ENCODE measurements at regions of chr11 and their contacts with region 1.

Region 1: DNA sequence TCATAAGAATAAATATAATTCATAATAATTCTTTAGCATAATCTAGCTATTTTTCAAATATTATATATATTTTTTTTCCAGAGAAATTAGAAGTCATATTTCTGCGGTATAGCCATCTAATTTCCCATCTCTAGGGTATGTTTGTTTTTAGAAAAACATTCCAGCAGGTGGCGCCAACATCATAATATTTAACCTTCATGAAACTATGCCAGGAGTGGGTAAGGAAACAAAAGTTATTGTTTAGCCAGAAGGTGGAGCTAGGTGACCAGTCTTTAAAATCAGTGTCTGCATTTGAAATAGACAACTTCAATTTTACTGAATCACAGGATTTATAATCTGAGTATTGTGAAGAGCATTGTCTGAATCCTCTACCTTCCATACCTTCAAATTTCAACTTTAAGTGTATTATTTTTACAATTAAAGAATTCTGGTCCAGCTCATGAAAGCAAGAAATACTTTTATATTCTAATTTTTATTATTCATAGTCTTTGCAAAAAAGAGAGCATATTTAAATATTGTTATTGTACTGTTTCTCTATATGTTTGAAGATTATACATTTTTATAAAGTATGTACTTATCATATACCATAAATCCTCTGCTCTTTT is 15.7 kb upstream of the CCDC179 start:
- DNase-seq: peak; percentile 81
- ATAC-seq: peak; percentile 86
- H3K4me3 Mint-ChIP-seq: no peak overlapping the region
- H3K27ac Mint-ChIP-seq: no peak overlapping the region
- H3K4me1 Mint-ChIP-seq: no peaks in the 10 kb centered on the region
- H3K27me3 Mint-ChIP-seq: no peaks in the 10 kb centered on the region
- CTCF ChIP-seq: peak; percentile 89

Region 2: GRCh38 chr11:22920939-22921565 is 45.1 kb after region 1 on chr11:
- CTCF ChIA-PET with region 1: interaction called, 13 read pairs
- POLR2A ChIA-PET with region 1: no interaction called
- intact Hi-C with region 1: no loop called
- DNase-seq: peak; percentile 30
- ATAC-seq: peak; percentile 66
- H3K4me3 Mint-ChIP-seq: no peak overlapping the region
- H3K27ac Mint-ChIP-seq: no peak overlapping the region
- H3K4me1 Mint-ChIP-seq: peaks cover 5% of the 10 kb centered on the region
- H3K27me3 Mint-ChIP-seq: no peaks in the 10 kb centered on the region
- CTCF ChIP-seq: peak; percentile 60

Region 3: DNA sequence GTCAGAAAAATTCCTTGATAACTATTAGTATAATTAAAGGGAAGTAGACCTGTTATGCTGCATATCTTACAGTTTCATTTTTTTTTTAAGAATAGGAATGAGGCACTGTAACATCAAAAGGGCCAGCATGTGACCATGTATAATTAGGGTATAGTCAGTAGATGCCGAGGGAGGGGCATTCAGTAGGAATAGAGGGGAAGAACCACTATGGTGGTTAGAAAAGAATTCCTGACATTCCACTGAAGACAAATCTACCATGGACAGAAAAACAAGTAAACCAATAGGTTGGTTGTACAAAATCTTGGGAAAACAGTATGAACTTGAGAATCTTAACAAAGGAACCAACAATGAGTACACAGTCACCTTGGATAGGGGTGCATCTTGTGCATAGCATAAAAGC is 62.7 kb after region 1 on chr11:
- CTCF ChIA-PET with region 1: no interaction called
- POLR2A ChIA-PET with region 1: no interaction called
- intact Hi-C with region 1: no loop called
- DNase-seq: no peak
- ATAC-seq: no peak
- H3K4me3 Mint-ChIP-seq: no peak overlapping the region
- H3K27ac Mint-ChIP-seq: no peak overlapping the region
- H3K4me1 Mint-ChIP-seq: no peaks in the 10 kb centered on the region
- H3K27me3 Mint-ChIP-seq: no peaks in the 10 kb centered on the region
- CTCF ChIP-seq: no peak

Region 4: DNA sequence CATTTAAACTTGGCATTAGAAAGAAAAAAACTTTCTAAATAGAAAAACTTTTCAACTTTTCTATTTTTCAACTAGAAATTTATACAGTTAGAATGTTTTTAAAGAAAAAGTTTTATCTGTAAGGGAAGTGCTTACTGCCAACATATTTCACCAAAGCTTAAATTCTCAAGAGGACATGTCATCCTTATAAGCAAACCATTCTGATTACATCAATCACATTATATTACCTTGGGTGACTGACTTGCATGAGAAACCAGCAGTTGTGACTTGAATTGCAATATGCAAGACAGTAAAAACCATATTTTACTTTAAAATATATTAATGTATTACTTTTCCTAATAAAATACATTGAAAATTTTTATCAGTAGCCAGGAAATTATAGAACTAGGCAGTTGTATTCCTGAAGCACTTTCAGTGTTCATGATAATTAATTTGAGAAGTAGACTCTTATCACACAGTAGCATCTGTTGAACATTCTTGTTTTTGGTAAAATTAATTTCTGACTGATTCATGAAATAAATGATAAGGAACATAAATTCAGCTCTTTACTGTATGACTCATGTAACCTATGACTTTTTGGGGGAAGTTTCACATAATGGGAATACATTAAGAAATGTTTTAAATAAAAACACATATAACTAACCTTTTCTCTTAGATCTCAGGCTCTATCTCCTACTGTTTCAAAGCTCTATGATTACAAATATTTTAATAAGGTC is 329.3 kb after region 1 on chr11:
- CTCF ChIA-PET with region 1: no interaction called
- POLR2A ChIA-PET with region 1: no interaction called
- intact Hi-C with region 1: no loop called
- DNase-seq: no peak
- ATAC-seq: no peak
- H3K4me3 Mint-ChIP-seq: no peak overlapping the region
- H3K27ac Mint-ChIP-seq: no peak overlapping the region
- H3K4me1 Mint-ChIP-seq: no peaks in the 10 kb centered on the region
- H3K27me3 Mint-ChIP-seq: no peaks in the 10 kb centered on the region
- CTCF ChIP-seq: no peak